T-cell (primary cell): ENCODE measurements at regions of chr21 and their contacts with region 1.

Region 1: GRCh38 chr21:44618504-44618903 is 6.6 kb downstream of the KRTAP10-8 start:
- DNase-seq: peak in 5 of 35 experiments; percentile 4 to 39 (median 10)
- ATAC-seq: peak; percentile 30 to 63 (median 40)
- H3K4me3 ChIP-seq: peak overlapping the region in 1 of 2 donors; percentile 10
- H3K4me3 Mint-ChIP-seq: peak overlapping the region; percentile 11 to 74 (median 47)
- H3K27ac ChIP-seq: peak overlapping the region; percentile 82
- H3K27ac Mint-ChIP-seq: peak overlapping the region; percentile 95 to 98
- H3K4me1 ChIP-seq: peaks cover 17 to 43% of the 10 kb centered on the region in 2 experiments
- H3K4me1 Mint-ChIP-seq: peaks cover 46 to 62% (median 55%) of the 10 kb centered on the region in 3 donors
- H3K27me3 ChIP-seq: peaks cover 0 to 9% of the 10 kb centered on the region in 2 experiments
- H3K27me3 Mint-ChIP-seq: no peaks in the 10 kb centered on the region

Region 2: DNA sequence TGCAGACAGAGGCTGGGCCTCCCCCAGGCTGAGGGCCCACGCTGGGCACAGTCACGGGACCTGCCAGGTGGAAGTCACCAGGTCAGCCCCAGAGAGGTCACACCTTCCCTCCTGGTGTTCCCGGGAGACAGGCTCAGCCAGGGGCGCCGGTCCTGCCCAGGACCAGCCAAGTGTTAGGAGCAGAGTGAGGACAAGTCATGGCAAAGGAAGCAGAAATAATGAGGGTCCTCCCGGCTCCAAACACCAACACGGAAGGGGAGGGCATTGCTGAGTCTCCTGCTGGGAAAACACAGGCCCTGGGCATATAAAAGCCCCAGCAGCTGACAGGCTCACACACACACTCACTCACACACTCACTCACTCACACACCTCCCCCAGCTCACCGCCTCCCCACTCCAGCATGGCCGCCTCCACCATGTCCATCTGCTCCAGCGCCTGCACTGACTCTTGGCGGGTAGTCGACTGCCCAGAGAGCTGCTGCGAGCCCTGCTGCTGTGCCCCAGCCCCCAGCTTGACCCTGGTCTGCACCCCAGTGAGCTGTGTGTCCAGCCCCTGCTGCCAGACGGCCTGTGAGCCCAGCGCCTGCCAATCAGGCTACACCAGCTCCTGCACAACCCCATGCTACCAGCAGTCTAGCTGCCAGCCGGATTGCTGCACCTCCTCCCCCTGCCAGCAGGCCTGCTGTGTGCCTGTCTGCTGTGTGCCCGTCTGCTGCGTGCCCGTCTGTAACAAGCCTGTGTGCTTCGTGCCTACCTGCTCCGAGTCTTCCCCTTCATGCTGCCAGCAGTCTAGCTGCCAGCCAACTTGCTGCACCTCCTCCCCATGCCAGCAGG is 18.7 kb after region 1 on chr21 and contains the start of gene KRTAP10-10:
- CTCF ChIA-PET with region 1: no interaction called
- POLR2A ChIA-PET with region 1: no interaction called
- DNase-seq: no peak
- ATAC-seq: no peak
- H3K4me3 ChIP-seq: no peak within 1 kb of the TSS
- H3K4me3 Mint-ChIP-seq: no peak within 1 kb of the TSS
- H3K27ac ChIP-seq: no peak within 1 kb of the TSS
- H3K27ac Mint-ChIP-seq: peak within 1 kb of the TSS in 1 of 2 donors; percentile 42
- H3K4me1 ChIP-seq: no peaks in the 10 kb centered on the region
- H3K4me1 Mint-ChIP-seq: no peaks in the 10 kb centered on the region
- H3K27me3 ChIP-seq: peaks cover 0 to 17% of the 10 kb centered on the region in 2 experiments
- H3K27me3 Mint-ChIP-seq: peaks cover 0 to 11% of the 10 kb centered on the region in 2 donors
- total RNA-seq, gene KRTAP10-10: not detected

Region 3: GRCh38 chr21:44657635-44658540 is 39.4 kb after region 1 on chr21 and contains the start of gene KRTAP12-3:
- CTCF ChIA-PET with region 1: interaction called in 1 of 2 experiments, 10 read pairs
- POLR2A ChIA-PET with region 1: interaction called in 1 of 2 experiments, 4 read pairs
- DNase-seq: peak; percentile 33 to 89 (median 71)
- ATAC-seq: peak; percentile 66 to 76 (median 73)
- H3K4me3 ChIP-seq: no peak within 1 kb of the TSS
- H3K4me3 Mint-ChIP-seq: peak within 1 kb of the TSS; percentile 58 to 72 (median 60)
- H3K27ac ChIP-seq: peak within 1 kb of the TSS; percentile 93
- H3K27ac Mint-ChIP-seq: peak within 1 kb of the TSS; percentile 89 to 98
- H3K4me1 ChIP-seq: peaks cover 0 to 62% of the 10 kb centered on the region in 2 experiments
- H3K4me1 Mint-ChIP-seq: peaks cover 60 to 73% (median 68%) of the 10 kb centered on the region in 3 donors
- H3K27me3 ChIP-seq: no peaks in the 10 kb centered on the region
- H3K27me3 Mint-ChIP-seq: no peaks in the 10 kb centered on the region
- total RNA-seq, gene KRTAP12-3: not detected

Region 4: GRCh38 chr21:46431884-46432488 is 1813.5 kb after region 1 on chr21:
- CTCF ChIA-PET with region 1: no interaction called
- POLR2A ChIA-PET with region 1: no interaction called
- DNase-seq: peak in 8 of 35 experiments; percentile 3 to 34 (median 23)
- ATAC-seq: peak in 2 of 4 experiments; percentile 30 to 55
- H3K4me3 ChIP-seq: no peak overlapping the region
- H3K4me3 Mint-ChIP-seq: peak overlapping the region in 2 of 3 donors; percentile 23 to 43
- H3K27ac ChIP-seq: no peak overlapping the region
- H3K27ac Mint-ChIP-seq: peak overlapping the region in 1 of 2 donors; percentile 49
- H3K4me1 ChIP-seq: peaks cover 0 to 6% of the 10 kb centered on the region in 2 experiments
- H3K4me1 Mint-ChIP-seq: peaks cover 0 to 7% (median 5%) of the 10 kb centered on the region in 3 donors
- H3K27me3 ChIP-seq: no peaks in the 10 kb centered on the region
- H3K27me3 Mint-ChIP-seq: no peaks in the 10 kb centered on the region